ENCODE measurements at regions of chr1 and their contacts with region 1.

Region 1: GRCh38 chr1:33740040-33740744 is 123.7 kb upstream of the HMGB4 start:
- DNase-seq: no peak
- ATAC-seq: no peak
- H3K4me3 ChIP-seq: no peak overlapping the region
- H3K27ac ChIP-seq: no peak overlapping the region
- H3K4me1 ChIP-seq: no peaks in the 10 kb centered on the region
- H3K27me3 ChIP-seq: peaks cover 0 to 3% of the 10 kb centered on the region in 2 experiments; a peak in 1 of 5 replicates
- CTCF ChIP-seq: no peak
- EP300 ChIP-seq: no peak
- POLR2A ChIP-seq: no peak
- RAD21 ChIP-seq: no peak

Region 2: DNA sequence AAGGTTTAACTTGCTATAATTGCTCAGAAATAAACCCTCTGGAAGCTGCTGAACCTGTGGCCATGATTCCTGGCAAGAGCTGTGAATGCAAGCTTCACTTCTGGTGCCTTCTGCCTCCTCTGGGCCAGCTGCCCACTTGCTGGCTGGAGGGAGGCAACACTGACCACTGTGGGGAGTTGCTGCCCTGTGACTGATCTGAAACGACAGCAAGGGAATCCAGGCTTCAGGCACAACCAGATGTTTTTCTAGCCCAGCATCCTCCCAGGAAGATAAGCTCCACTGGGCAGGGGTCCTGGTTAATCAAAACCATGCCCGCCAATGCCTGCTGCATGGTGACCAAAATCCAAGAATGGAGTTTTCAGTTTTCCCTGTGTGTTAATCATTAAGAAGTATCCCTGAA is 56.3 kb before region 1 on chr1:
- CTCF ChIA-PET with region 1: no interaction called
- POLR2A ChIA-PET with region 1: no interaction called
- in situ Hi-C with region 1: no loop called
- intact Hi-C with region 1: no loop called
- DNase-seq: no peak
- ATAC-seq: no peak
- H3K4me3 ChIP-seq: no peak overlapping the region
- H3K27ac ChIP-seq: no peak overlapping the region
- H3K4me1 ChIP-seq: no peaks in the 10 kb centered on the region
- H3K27me3 ChIP-seq: peaks cover 0 to 6% of the 10 kb centered on the region in 2 experiments; a peak in 1 of 5 replicates
- CTCF ChIP-seq: no peak
- EP300 ChIP-seq: no peak
- POLR2A ChIP-seq: no peak
- RAD21 ChIP-seq: no peak

Region 3: DNA sequence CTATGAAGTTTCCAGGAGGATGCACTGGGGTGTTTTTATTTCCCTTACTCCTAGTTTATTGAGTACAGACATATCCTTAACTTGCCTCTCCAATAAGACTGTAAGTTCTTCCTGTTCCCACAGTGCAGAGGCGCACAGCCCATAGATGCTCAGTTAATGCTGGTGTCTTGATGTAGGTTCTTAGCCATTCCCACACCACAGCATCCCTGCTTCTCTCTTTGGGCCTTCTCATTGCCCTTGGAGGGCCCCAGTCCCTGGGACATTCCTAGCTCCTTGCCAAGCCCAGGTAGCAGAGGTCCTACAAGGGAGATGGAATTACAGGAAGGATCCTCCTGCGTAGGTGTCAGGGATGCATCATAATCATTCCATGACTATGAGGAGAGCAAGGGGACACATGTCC is 62.1 kb after region 1 on chr1:
- CTCF ChIA-PET with region 1: no interaction called
- POLR2A ChIA-PET with region 1: no interaction called
- in situ Hi-C with region 1: loop called (anchors 10 kb)
- intact Hi-C with region 1: no loop called
- DNase-seq: no peak
- ATAC-seq: no peak
- H3K4me3 ChIP-seq: no peak overlapping the region
- H3K27ac ChIP-seq: no peak overlapping the region
- H3K4me1 ChIP-seq: no peaks in the 10 kb centered on the region
- H3K27me3 ChIP-seq: peaks cover 0 to 1% of the 10 kb centered on the region in 2 experiments; a peak in 1 of 5 replicates
- CTCF ChIP-seq: no peak
- EP300 ChIP-seq: no peak
- POLR2A ChIP-seq: no peak
- RAD21 ChIP-seq: no peak

Measured in HepG2 (cell line).